Esophagus muscularis mucosa (tissue), 4 donors: ENCODE measurements at regions of chr12 and their contacts with region 1.

Region 1: DNA sequence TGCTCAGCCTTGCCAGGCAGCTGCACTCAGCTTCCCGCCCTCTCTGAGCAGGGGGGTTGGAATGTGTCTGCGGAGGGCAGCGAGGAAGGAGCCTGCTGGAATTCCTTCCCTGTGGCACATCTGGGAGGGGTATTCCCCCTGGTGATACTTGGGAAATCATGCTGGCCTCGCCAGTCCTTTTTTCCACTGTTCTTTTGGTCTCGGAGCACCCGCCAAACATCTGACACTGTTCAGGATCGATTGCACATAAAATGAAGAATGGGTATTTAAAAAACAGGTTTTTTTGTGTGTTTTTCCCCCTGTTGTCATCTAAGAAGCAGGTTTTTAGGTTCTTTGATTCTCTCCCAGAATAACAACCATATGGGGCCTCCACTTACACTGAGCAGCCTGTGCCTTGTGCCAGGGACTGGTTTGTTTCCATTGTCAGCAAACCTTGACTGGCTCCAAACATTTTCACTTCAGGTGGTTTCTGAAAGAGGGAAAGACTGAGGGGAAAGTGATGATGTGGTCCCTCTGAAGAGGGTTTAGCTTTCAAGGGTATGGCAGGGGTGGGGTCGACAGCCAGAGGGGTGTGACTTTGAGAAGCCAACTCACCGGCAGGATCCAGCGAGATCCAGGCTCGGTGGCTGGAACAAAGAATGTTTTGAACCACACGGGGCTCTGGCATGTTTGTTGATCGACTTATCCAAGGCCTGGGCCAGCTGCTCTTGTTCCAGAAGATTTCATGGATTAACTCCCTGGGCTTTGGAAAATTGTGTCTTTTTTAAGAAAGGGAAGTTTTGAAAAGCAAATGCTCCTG is 215.1 kb downstream of the CACNA1C start:
- DNase-seq: no peak
- H3K4me3 ChIP-seq: peak overlapping the region in 1 of 4 donors; percentile 16
- H3K27ac ChIP-seq: peak overlapping the region; percentile 78 to 86 (median 84)
- H3K4me1 ChIP-seq: peaks cover 68 to 85% (median 79%) of the 10 kb centered on the region in 4 donors
- H3K27me3 ChIP-seq: no peaks in the 10 kb centered on the region
- CTCF ChIP-seq: no peak
- EP300 ChIP-seq: no peak
- POLR2A ChIP-seq: no peak

Region 2: GRCh38 chr12:2163172-2163941 is 104.5 kb before region 1 on chr12:
- intact Hi-C with region 1: loop called (anchors 5 kb)
- DNase-seq: peak; percentile 95
- H3K4me3 ChIP-seq: no peak overlapping the region
- H3K27ac ChIP-seq: peak overlapping the region; percentile 79 to 86 (median 84)
- H3K4me1 ChIP-seq: peaks cover 51 to 78% (median 67%) of the 10 kb centered on the region in 4 donors
- H3K27me3 ChIP-seq: no peaks in the 10 kb centered on the region
- CTCF ChIP-seq: no peak
- EP300 ChIP-seq: no peak
- POLR2A ChIP-seq: no peak

Region 3: DNA sequence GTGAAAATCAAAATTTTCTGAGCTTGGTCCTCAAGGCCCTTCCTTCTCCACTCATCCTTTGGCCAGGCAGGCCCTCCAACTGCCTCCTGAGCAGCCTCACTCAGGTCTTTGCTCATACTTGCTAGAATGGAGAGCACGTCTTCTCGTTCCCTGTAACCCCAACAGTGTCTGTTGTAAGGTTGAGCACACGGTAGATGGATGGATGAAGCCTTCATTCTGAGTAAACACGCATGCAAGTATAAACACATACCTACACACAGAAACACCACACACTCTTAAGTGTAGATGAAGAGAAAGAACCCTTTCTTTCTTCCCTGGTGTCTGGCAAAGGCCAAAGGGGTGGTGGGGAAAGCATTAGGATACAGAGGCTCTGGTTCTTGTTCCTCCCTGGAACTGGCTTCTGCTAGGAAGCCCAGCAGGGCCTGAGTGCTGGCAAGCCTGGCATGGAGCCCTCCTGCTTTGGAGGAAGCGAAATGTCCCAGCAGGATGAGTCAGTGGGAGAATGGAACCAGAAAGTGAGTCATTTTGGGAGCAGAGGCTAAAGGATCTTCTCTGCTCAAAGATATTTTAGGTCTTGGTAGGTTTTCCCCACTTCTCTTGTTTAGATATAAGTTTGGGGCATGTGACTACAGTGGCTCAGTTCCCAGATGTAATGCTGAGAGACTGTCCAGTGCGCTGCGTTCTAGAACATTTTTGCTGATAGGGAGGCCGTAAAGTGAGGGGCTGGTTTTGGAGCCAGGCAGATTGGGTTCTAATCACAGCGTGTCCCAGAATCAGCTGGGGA is 87.8 kb before region 1 on chr12:
- intact Hi-C with region 1: loop called (anchors 5 kb)
- DNase-seq: no peak
- H3K4me3 ChIP-seq: no peak overlapping the region
- H3K27ac ChIP-seq: peak overlapping the region; percentile 75 to 89 (median 78)
- H3K4me1 ChIP-seq: peaks cover 54 to 93% (median 80%) of the 10 kb centered on the region in 4 donors
- H3K27me3 ChIP-seq: no peaks in the 10 kb centered on the region
- CTCF ChIP-seq: peak in 1 of 3 experiments; percentile 8
- EP300 ChIP-seq: peak; percentile 45
- POLR2A ChIP-seq: no peak

Region 4: DNA sequence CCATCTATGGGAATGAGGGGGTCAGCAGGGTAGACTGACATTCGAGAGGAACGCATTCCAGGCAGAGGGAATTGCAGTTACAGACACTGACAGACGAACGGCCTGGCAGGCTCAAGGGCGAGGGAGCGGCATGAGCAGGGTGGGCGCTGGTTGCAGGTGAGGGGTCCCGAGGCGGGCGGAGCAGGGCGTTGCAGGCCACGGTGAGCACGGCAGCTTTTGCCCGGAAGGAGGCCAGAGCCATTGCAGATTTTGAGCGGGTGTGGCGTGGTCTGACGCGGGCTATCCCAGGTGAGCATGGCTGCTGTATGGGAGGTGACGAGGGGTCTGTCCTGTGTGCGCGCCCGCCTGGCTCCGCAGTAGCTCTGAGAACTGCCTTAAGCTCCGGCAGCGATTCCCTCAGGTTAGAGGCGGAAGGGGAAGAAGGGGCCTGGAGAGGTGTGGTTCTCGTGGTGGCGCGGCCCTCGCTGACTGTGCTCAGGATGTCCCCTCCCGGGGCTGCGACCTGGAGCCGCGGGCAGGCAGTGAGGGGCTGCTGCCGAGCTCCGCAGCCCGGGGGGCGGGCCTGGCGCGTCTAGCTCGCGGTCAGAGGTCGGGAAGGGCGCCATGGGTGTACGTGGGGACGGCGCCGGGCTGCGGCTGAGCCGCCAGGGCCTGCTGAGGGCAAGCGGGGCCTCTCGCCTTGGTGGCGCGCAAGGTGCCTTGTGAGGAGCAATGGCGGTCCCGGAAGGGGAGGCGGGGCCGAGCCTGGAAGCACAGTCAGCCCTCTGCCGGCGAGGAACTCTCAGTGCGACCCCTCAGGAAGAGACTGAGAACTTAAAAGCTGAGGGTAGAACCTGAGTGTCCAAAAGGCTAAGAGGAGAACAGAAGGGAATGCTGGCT is 38.0 kb before region 1 on chr12:
- intact Hi-C with region 1: no loop called
- DNase-seq: no peak
- H3K4me3 ChIP-seq: no peak overlapping the region
- H3K27ac ChIP-seq: peak overlapping the region in 3 of 4 donors; percentile 25 to 30 (median 30)
- H3K4me1 ChIP-seq: peaks cover 29 to 53% (median 40%) of the 10 kb centered on the region in 4 donors
- H3K27me3 ChIP-seq: no peaks in the 10 kb centered on the region
- CTCF ChIP-seq: no peak
- EP300 ChIP-seq: no peak
- POLR2A ChIP-seq: no peak

Region 5: GRCh38 chr12:2414810-2415567 is 147.1 kb after region 1 on chr12:
- intact Hi-C with region 1: no loop called
- DNase-seq: no peak
- H3K4me3 ChIP-seq: no peak overlapping the region
- H3K27ac ChIP-seq: no peak overlapping the region
- H3K4me1 ChIP-seq: peaks cover 0 to 42% (median 16%) of the 10 kb centered on the region in 4 donors
- H3K27me3 ChIP-seq: no peaks in the 10 kb centered on the region
- CTCF ChIP-seq: no peak
- EP300 ChIP-seq: no peak
- POLR2A ChIP-seq: no peak

Region 6: DNA sequence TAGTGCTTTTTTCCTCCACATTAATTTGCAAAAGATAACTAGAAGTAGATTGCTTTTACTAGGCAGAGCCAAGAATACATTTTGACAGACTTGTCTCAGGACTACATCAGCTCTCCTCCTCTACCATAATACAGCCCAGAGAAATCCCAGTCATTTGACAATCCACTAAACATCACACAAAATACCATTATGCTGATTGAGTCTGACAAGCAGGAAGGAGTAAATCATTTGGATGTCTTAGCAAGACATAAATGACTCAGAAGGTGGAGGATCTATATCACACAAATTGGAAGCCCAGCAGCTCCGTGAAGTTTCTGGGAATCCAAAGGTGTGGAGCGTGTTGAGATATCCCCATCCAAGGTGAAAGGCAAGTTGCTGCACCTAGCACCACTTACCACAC is 451.5 kb after region 1 on chr12:
- intact Hi-C with region 1: no loop called
- DNase-seq: no peak
- H3K4me3 ChIP-seq: no peak overlapping the region
- H3K27ac ChIP-seq: no peak overlapping the region
- H3K4me1 ChIP-seq: no peaks in the 10 kb centered on the region
- H3K27me3 ChIP-seq: peaks cover 0 to 22% (median 0%) of the 10 kb centered on the region in 4 donors
- CTCF ChIP-seq: no peak
- EP300 ChIP-seq: no peak
- POLR2A ChIP-seq: no peak